AG04449 (cell line): ENCODE measurements at regions of chr19 and their contacts with region 1.

Region 1: GRCh38 chr19:506404-507285 is 652 bp upstream of the TPGS1 start:
- DNase-seq: peak; percentile 100
- H3K4me3 ChIP-seq: peak overlapping the region; percentile 95
- CTCF ChIP-seq: peak; percentile 100

Region 2: GRCh38 chr19:294946-295686 is 211.5 kb before region 1 on chr19:
- CTCF ChIA-PET with region 1: interaction called, 11 read pairs
- POLR2A ChIA-PET with region 1: no interaction called
- DNase-seq: no peak
- H3K4me3 ChIP-seq: peak overlapping the region; percentile 32
- CTCF ChIP-seq: peak; percentile 97

Region 3: GRCh38 chr19:488505-489417 is 17.9 kb before region 1 on chr19:
- CTCF ChIA-PET with region 1: interaction called, 88 read pairs
- POLR2A ChIA-PET with region 1: interaction called, 12 read pairs
- DNase-seq: no peak
- H3K4me3 ChIP-seq: peak overlapping the region; percentile 72
- CTCF ChIP-seq: no peak

Region 4: GRCh38 chr19:495402-496186 is 11.1 kb before region 1 on chr19:
- CTCF ChIA-PET with region 1: interaction called, 88 read pairs
- POLR2A ChIA-PET with region 1: interaction called, 3 read pairs
- DNase-seq: no peak
- H3K4me3 ChIP-seq: no peak overlapping the region
- CTCF ChIP-seq: peak; percentile 76

Region 5: DNA sequence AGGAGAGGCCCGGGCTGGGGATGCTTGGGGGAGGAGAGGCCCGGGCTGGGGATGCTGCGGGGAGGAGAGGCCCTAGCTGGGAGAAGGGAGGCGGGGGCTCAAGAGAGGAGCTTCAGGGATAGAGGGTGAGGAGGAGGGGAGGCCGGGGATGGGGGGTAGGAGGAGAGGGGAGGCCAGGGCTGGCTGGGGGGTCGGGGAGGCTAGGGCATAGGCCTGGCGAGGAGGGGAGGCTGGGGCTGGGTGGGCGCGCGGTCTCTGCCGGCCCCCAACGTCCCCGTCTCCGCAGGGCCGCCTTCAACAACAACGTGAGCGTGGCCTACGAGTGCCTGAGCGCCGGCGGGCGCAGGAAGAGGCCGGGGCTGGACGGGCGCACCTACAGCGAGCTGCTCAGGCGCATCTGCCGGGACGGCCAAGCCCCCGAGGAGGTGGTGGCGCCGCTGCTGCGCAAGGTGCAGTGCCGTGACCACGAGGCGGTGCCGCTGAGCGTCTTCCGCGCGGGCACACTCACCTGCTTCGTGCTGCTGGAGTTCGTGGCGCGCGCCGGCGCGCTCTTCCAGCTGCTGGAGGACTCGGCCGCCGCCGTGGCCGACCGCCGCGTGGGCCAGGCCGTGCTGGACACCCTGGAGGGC is 12.1 kb after region 1 on chr19:
- CTCF ChIA-PET with region 1: interaction called, 113 read pairs
- POLR2A ChIA-PET with region 1: interaction called, 3 read pairs
- DNase-seq: no peak
- H3K4me3 ChIP-seq: no peak overlapping the region
- CTCF ChIP-seq: peak; percentile 10

Region 6: GRCh38 chr19:531009-531752 is 24.5 kb after region 1 on chr19:
- CTCF ChIA-PET with region 1: interaction called, 113 read pairs
- POLR2A ChIA-PET with region 1: interaction called, 7 read pairs
- DNase-seq: no peak
- H3K4me3 ChIP-seq: peak overlapping the region; percentile 86
- CTCF ChIP-seq: no peak